ENCODE measurements at regions of chr7 and their contacts with region 1.

Region 1: DNA sequence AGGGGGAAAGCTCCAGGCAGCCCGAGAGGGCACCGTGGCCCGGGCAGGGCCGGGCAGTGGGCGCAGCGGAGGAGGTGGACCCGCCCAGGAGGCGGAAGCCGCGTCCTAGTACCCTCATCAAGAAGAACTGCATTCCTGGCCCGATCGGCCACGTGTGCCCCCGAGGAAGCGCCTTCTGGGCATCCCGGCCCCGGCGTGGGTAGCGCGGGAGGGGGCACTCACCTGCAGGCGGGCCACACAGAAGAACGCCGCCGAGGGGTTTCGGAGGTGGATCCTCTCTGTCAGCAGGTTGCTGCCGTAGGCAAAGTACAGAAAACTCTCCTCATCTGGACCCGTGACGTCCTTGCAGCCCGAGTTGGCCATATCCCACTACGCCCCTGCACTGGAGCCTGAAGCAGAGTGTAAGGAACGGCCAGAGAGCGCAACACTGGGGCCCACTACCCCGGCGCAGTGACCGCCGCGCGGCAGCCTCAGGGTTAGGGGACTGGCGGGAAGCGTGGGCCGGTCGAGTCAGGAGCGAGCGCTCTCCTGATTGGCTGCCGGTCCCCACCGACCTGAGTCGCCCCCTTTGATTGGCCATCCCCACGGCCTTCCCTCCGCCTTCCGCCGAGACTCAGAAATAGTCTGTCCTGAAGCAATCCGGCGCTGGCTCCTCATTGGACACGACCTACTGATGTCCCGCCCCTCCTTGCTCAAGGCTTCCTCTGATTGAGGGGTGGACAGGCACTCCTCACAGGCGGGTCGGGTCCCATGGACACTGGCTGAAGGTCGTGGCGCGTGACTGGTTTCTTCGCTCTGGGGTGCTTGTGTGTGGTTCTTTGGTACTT is at the start of gene GGCT:
- DNase-seq: peak; percentile 100
- H3K4me3 ChIP-seq: peak within 1 kb of the TSS; percentile 90
- CTCF ChIP-seq: no peak
- POLR2A ChIP-seq: no peak
- total RNA-seq, gene GGCT: 40.0 to 66.2 (median 60.8) TPM

Region 2: DNA sequence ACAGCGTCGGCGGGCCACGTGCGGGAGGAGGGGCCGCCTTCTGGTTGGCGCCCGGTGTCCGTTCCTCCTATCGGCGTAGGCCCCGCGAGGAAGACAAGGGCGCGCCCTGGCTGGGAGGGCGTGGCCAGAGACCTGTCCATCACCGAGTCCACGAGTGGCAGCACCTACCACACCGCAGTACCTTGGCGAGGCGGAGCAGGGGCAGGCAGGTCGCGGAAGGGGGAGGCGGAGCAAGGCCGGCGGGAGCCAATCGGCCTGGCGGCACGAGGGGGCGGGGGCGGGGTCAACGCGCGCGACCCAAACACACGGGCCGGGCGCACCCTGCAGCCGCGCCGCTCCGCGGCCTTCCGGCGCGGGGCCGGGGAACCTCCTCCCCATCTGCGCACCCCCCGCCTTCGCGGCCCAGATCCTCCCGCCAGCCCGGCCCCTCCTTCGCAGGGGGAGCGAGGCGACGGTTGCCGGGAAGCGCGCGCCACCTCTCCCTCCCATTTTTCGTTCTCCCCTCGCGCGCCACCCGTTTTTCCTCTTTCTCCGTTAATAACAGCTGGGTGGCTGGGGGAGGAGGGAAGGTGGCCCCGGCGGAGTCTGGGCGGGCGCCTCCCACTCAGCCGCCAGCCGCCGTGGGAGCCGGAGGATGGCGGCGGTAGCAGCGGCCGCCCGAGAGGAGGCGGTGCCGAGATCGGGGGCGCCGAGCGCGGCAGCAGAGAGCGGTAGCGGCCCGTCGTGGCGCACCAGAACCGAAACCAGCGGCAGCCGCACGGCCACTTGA is 220.1 kb before region 1 on chr7 and contains the start of gene ZNRF2:
- intact Hi-C with region 1: loop called (anchors 5 kb)
- DNase-seq: peak; percentile 98 to 100
- H3K4me3 ChIP-seq: peak within 1 kb of the TSS; percentile 78
- CTCF ChIP-seq: peak in 1 of 3 donors; percentile 18
- POLR2A ChIP-seq: peak in 1 of 2 donors; percentile 34
- total RNA-seq, gene ZNRF2: 32.9 to 43.1 (median 35.4) TPM

Measured in lower leg skin (tissue), 4 donors.